Mammary epithelial cell (primary cell): ENCODE measurements at regions of chr6 and their contacts with region 1.

Region 1: GRCh38 chr6:11207199-11207968 is 25.1 kb downstream of the NEDD9 start:
- DNase-seq: peak; percentile 99
- H3K4me3 ChIP-seq: no peak overlapping the region
- H3K27ac ChIP-seq: peak overlapping the region; percentile 99
- H3K4me1 ChIP-seq: peaks cover 36% of the 10 kb centered on the region
- H3K27me3 ChIP-seq: no peaks in the 10 kb centered on the region
- CTCF ChIP-seq: no peak

Region 2: DNA sequence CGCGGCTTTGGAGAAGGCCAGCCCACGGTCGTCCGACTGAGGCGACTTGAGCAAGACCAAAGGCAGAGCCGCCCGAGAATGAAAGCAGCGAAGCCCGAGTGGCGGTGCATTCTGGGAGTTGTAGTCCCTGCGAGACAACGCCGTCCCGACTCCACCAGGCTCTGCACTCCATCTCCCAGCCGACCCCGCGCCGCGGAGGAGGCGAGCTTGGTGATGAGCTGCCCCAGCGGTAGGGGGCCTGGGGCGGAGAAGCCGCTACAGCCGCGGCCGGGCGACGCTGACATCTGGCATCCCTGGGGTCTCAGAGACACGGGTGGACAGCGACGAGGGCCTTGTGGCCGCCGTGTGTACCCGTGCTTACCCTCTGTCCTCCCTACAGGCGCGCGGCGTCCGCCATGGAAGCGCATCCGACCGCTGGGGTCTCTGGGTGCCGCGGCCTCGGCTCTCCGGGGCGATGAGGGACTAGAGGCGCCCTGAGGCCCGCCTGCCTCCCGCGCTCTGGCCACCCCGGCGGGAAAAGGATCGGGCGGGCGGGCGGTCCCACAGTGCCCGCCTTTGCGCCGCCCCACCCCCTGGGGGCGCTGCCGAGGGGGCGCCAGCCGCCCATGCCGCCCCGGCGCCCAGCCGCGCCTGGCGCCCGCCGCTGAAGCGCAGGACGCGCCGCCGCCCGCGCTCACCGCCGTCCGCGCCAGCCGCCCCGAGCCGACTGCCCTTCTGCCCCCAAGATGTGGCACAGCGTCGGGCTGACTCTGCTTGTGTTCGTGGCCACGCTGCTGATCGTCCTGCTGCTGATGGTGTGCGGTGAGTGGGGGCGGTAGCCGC is 113.6 kb before region 1 on chr6 and contains the start of gene SMIM13:
- CTCF ChIA-PET with region 1: no interaction called
- dilution Hi-C with region 1: no loop called
- in situ Hi-C with region 1: no loop called
- intact Hi-C with region 1: loop called (anchors 5 kb)
- DNase-seq: peak; percentile 95
- H3K4me3 ChIP-seq: peak within 1 kb of the TSS; percentile 81 to 100 (median 89)
- H3K27ac ChIP-seq: peak within 1 kb of the TSS; percentile 87
- H3K4me1 ChIP-seq: peaks cover 12% of the 10 kb centered on the region
- H3K27me3 ChIP-seq: no peaks in the 10 kb centered on the region
- CTCF ChIP-seq: peak; percentile 16 to 42
- total RNA-seq, gene SMIM13: 12.3 to 17.5 TPM

Region 3: GRCh38 chr6:11108425-11109125 is 98.8 kb before region 1 on chr6:
- CTCF ChIA-PET with region 1: no interaction called
- dilution Hi-C with region 1: no loop called
- in situ Hi-C with region 1: no loop called
- intact Hi-C with region 1: no loop called
- DNase-seq: no peak
- H3K4me3 ChIP-seq: no peak overlapping the region
- H3K27ac ChIP-seq: no peak overlapping the region
- H3K4me1 ChIP-seq: no peaks in the 10 kb centered on the region
- H3K27me3 ChIP-seq: no peaks in the 10 kb centered on the region
- CTCF ChIP-seq: peak in 1 of 2 donors; percentile 16

Region 4: GRCh38 chr6:11144393-11144851 is 63.0 kb before region 1 on chr6:
- CTCF ChIA-PET with region 1: no interaction called
- dilution Hi-C with region 1: no loop called
- in situ Hi-C with region 1: no loop called
- intact Hi-C with region 1: loop called (anchors 1 kb)
- DNase-seq: peak; percentile 70
- H3K4me3 ChIP-seq: no peak overlapping the region
- H3K27ac ChIP-seq: peak overlapping the region; percentile 79
- H3K4me1 ChIP-seq: peaks cover 46% of the 10 kb centered on the region
- H3K27me3 ChIP-seq: no peaks in the 10 kb centered on the region
- CTCF ChIP-seq: peak; percentile 94 to 96

Region 5: DNA sequence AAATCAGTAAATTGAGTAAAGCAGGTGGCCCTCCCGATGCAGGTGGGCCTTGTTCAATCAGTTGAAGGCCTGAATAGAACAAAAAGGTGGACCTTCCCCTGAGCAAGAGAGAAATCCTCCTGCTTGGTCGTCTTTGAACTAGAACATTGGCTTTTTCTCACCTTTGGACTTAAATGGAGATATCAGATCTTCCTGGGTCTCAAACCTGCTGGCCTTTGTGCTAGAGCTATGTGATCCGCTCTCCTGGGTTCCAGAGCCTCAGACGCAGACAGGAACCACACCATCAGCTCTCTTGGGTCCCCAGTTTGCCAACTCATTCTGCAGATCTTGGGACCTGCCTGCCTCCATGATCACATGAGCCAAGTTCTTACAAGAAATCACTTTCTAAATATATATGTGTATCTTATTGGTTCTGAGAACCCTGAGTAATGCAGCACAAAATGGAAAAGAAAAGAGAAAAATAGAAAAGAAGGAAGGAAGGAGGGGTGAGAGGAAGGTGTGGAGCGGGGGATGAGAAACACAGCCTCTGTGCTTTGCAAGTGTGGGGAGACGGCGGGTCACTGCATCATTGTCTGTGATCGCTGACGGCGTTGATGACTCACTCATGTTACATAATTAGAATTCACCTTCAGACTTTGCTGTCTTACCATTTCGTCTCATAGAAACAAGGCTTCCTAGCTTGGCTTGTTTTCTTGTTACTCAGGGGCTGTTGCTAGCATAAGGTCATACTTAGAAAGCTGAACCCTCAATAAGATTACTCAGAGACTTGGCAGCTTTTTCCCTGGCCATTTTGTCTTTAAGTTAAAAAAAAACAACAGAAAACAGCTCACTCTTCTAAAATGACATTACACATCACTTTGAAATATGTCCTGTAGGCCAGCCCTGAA is 110.7 kb after region 1 on chr6:
- CTCF ChIA-PET with region 1: no interaction called
- dilution Hi-C with region 1: no loop called
- in situ Hi-C with region 1: no loop called
- intact Hi-C with region 1: loop called (anchors 1 kb)
- DNase-seq: peak; percentile 99
- H3K4me3 ChIP-seq: no peak overlapping the region
- H3K27ac ChIP-seq: peak overlapping the region; percentile 96
- H3K4me1 ChIP-seq: peaks cover 51% of the 10 kb centered on the region
- H3K27me3 ChIP-seq: no peaks in the 10 kb centered on the region
- CTCF ChIP-seq: no peak

Region 6: DNA sequence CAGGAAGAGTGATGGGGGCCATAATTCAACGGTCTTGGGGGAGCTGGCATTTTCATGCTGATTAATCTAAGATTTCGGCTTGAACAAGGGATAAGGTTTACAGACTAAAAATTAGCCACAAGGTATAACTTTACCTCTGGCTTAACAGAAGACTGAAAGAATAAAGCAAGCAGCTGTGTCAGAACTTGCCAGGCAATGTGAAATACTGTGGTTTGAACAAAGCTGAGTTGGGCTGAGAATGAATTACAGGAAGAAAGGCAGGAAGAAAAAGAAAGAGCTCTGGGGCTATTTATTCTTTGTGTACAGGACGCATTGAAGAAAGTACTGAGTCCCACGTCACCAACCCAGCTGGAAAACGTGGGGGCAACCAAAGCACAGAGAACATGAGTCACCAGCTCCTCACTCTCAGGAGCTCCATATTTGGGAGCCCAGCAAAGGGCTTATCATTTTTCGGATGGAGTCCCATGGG is 146.6 kb after region 1 on chr6:
- CTCF ChIA-PET with region 1: interaction called, 14 read pairs
- dilution Hi-C with region 1: no loop called
- in situ Hi-C with region 1: no loop called
- intact Hi-C with region 1: no loop called
- DNase-seq: peak; percentile 90
- H3K4me3 ChIP-seq: no peak overlapping the region
- H3K27ac ChIP-seq: peak overlapping the region; percentile 83
- H3K4me1 ChIP-seq: peaks cover 16% of the 10 kb centered on the region
- H3K27me3 ChIP-seq: no peaks in the 10 kb centered on the region
- CTCF ChIP-seq: no peak